Adrenal gland (tissue), 19 donors: ENCODE measurements at regions of chr16 and their contacts with region 1.

Region 1: GRCh38 chr16:75527825-75528299 is 8.0 kb downstream of the CHST5 start:
- DNase-seq: peak in 2 of 7 donors; percentile 13 to 25
- H3K4me3 ChIP-seq: no peak overlapping the region
- H3K27ac ChIP-seq: no peak overlapping the region
- H3K4me1 ChIP-seq: no peaks in the 10 kb centered on the region
- H3K27me3 ChIP-seq: no peaks in the 10 kb centered on the region
- CTCF ChIP-seq: no peak
- POLR2A ChIP-seq: no peak

Region 2: GRCh38 chr16:74862741-74863244 is 665.1 kb before region 1 on chr16:
- intact Hi-C with region 1: no loop called
- DNase-seq: no peak
- H3K4me3 ChIP-seq: no peak overlapping the region
- H3K27ac ChIP-seq: no peak overlapping the region
- H3K4me1 ChIP-seq: peaks cover 0 to 4% of the 10 kb centered on the region in 2 donors
- H3K27me3 ChIP-seq: no peaks in the 10 kb centered on the region
- CTCF ChIP-seq: peak; percentile 69 to 94 (median 87)
- POLR2A ChIP-seq: no peak

Region 3: DNA sequence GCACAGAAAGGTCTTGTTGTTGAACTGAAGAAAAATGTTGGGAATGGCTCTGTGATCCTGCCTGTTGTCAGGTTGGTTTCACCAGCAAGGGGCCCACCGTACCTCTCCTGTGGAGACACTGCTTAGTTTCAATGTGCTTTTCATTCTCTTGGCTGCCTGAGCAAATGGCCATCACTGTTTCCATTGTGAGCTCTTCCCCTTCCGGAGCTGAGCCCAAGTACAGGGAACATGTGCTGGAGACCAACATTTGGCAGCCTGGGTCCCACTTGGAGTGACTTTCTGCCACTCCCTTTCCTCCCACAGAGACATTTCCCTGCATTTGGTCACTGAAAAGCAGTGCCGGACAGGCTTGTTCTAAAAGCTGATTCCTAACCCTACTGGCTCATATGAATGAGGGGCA is 61.4 kb after region 1 on chr16:
- intact Hi-C with region 1: loop called in 1 of 2 experiments (anchors 5 kb)
- DNase-seq: no peak
- H3K4me3 ChIP-seq: no peak overlapping the region
- H3K27ac ChIP-seq: no peak overlapping the region
- H3K4me1 ChIP-seq: peaks cover 0 to 6% of the 10 kb centered on the region in 2 donors
- H3K27me3 ChIP-seq: no peaks in the 10 kb centered on the region
- CTCF ChIP-seq: no peak
- POLR2A ChIP-seq: no peak